ENCODE measurements at regions of chr6 and their contacts with region 1.

Region 1: DNA sequence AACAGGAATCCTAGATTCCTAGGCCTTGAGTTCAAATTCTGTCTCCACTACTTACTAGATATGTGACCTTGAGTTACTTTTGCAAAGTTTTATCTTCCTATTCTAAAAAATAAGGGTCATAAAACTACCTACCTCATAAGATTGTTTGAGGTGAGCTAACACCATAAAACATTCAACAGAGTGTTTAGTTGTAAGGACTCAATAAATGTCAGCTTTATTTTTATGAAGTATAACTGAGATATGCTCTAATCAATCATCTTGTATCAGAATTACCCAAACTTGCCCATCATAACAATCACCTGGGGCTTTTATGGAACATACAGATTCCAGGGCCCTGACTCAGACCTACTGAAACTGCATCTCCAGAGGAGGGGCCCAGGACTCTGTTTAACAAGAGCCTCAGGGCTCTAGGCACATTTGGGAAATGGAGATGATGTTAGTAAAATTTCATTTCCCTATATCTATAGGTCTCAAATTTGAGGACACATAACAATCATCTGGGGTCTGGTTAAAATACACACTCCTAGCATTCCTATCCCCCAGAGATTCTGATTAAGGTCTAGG is 35.5 kb upstream of the MRAP2 start:
- DNase-seq: no peak
- H3K4me3 ChIP-seq: no peak overlapping the region
- H3K27ac ChIP-seq: no peak overlapping the region
- H3K4me1 ChIP-seq: no peaks in the 10 kb centered on the region
- H3K27me3 ChIP-seq: no peaks in the 10 kb centered on the region
- CTCF ChIP-seq: no peak
- EP300 ChIP-seq: no peak
- POLR2A ChIP-seq: no peak

Region 2: GRCh38 chr6:83884523-83884922 is 113.6 kb before region 1 on chr6:
- in situ Hi-C with region 1: no loop called
- intact Hi-C with region 1: no loop called
- DNase-seq: no peak
- H3K4me3 ChIP-seq: no peak overlapping the region
- H3K27ac ChIP-seq: no peak overlapping the region
- H3K4me1 ChIP-seq: no peaks in the 10 kb centered on the region
- H3K27me3 ChIP-seq: no peaks in the 10 kb centered on the region
- CTCF ChIP-seq: peak; percentile 57 to 79 (median 66)
- EP300 ChIP-seq: no peak
- POLR2A ChIP-seq: no peak

Region 3: GRCh38 chr6:83901624-83902023 is 96.5 kb before region 1 on chr6:
- in situ Hi-C with region 1: no loop called
- intact Hi-C with region 1: no loop called
- DNase-seq: no peak
- H3K4me3 ChIP-seq: no peak overlapping the region
- H3K27ac ChIP-seq: no peak overlapping the region
- H3K4me1 ChIP-seq: no peaks in the 10 kb centered on the region
- H3K27me3 ChIP-seq: no peaks in the 10 kb centered on the region
- CTCF ChIP-seq: no peak
- EP300 ChIP-seq: no peak
- POLR2A ChIP-seq: no peak

Region 4: GRCh38 chr6:83974409-83975050 is 23.6 kb before region 1 on chr6:
- in situ Hi-C with region 1: no loop called
- intact Hi-C with region 1: loop called (anchors 1 kb)
- DNase-seq: no peak
- H3K4me3 ChIP-seq: no peak overlapping the region
- H3K27ac ChIP-seq: no peak overlapping the region
- H3K4me1 ChIP-seq: no peaks in the 10 kb centered on the region
- H3K27me3 ChIP-seq: no peaks in the 10 kb centered on the region
- CTCF ChIP-seq: no peak
- EP300 ChIP-seq: no peak
- POLR2A ChIP-seq: no peak

Region 5: GRCh38 chr6:84645000-84645399 is 646.9 kb after region 1 on chr6:
- in situ Hi-C with region 1: no loop called
- intact Hi-C with region 1: no loop called
- DNase-seq: no peak
- H3K4me3 ChIP-seq: no peak overlapping the region
- H3K27ac ChIP-seq: no peak overlapping the region
- H3K4me1 ChIP-seq: no peaks in the 10 kb centered on the region
- H3K27me3 ChIP-seq: no peaks in the 10 kb centered on the region
- CTCF ChIP-seq: no peak
- EP300 ChIP-seq: no peak
- POLR2A ChIP-seq: no peak

Measured in transverse colon (tissue), 4 donors.